ENCODE measurements at regions of chr13 and their contacts with region 1.

Region 1: DNA sequence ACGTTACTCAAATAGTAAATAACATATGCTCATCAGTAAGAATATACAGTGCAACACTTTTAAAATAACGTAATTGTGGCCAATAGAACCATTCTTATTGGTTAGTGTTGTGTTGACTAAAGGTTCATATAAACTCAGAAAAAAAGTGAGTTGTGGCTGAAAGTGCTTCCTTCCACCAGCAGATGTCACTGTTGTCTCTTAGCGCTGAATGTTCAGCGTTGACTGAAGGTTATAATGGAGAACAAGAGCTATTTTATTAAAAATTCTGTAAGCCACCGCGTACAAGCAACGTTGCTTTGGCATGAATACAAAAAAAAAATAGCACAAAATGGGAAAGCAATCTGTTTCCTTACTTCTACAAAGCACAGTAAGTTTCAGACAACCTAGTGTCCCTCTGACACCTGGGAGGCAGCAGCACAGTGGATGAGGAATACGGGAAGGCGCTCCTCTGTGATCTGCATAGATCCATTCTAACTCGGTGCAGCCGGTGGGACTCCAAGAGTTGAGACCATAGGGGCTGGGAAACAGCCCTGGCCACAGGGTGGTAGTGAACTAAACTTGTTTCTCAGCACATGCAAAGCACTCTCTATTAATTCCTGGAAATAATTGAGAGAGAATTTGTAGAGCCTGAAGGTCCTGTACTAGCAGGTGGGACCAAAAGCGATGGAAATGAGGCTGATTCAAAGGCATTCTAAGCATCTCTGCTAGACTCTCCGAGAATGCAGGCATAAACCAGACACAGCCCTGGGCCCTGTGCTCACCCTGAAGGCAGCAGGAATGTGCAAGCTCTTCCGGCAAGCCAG is 24.0 kb upstream of the OXGR1 start:
- DNase-seq: peak; percentile 46
- ATAC-seq: peak; percentile 89
- H3K4me3 ChIP-seq: peak overlapping the region in 1 of 2 experiments; percentile 20; a peak in 1 of 4 replicates
- H3K27ac ChIP-seq: peak overlapping the region; percentile 61
- H3K4me1 ChIP-seq: peaks cover 8% of the 10 kb centered on the region
- H3K27me3 ChIP-seq: no peaks in the 10 kb centered on the region
- CTCF ChIP-seq: peak; percentile 81

Region 2: DNA sequence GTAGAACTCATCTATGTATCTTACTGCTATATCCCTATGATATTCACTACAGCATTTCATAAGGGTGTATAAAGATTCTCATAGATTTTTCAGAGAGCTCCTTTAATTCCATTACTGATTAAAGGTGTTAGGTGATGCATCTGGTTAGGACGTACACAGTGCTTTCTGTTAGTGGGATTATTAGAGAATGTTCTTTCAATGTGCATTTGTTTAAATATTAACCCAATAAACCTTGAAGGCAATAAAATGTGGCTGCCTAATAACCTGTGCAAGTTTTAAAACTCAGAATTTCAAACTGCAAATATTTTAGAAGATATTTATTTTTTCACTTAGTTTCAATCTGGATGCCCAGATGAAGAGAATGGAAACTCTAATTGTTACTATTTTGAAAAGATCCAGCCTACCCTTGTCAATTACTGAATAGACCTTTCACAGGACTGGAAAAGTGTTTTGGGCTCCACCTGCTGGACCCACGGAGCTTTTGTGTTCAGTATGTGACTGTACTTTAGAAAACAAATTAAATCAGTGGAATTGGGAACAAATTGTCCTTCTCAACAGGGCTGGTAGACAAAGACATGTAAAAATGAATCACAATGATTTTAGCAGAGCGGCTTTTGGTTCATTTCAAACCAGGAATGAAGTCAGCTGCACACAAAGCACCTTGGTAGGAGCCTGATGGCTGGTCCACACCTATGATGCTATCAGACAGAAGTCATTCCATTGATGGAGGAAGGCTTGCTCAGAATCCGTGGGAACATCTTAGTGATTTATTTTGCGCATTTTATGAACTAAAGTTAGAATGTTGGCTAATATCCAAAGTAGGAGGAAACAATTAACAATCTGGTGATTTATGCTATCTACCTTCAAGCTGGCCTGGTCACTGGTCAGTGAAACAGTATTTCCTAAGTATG is 326.3 kb after region 1 on chr13:
- CTCF ChIA-PET with region 1: no interaction called
- POLR2A ChIA-PET with region 1: no interaction called
- in situ Hi-C with region 1: no loop called
- intact Hi-C with region 1: loop called (anchors 10 kb)
- DNase-seq: no peak
- ATAC-seq: peak; percentile 74
- H3K4me3 ChIP-seq: no peak overlapping the region
- H3K27ac ChIP-seq: peak overlapping the region; percentile 96
- H3K4me1 ChIP-seq: peaks cover 39% of the 10 kb centered on the region
- H3K27me3 ChIP-seq: no peaks in the 10 kb centered on the region
- CTCF ChIP-seq: peak; percentile 68